Activated CD4-positive, alpha-beta memory T cell treated with anti-CD3 and anti-CD28 coated beads for 36 hours (primary cell): ENCODE measurements at regions of chr16 and their contacts with region 1.

Region 1: GRCh38 chr16:84970447-84971127 is 40.7 kb downstream of the ZDHHC7 start:
- DNase-seq: peak; percentile 85
- H3K4me3 Mint-ChIP-seq: no peak overlapping the region
- H3K27ac Mint-ChIP-seq: no peak overlapping the region
- H3K4me1 Mint-ChIP-seq: no peaks in the 10 kb centered on the region
- H3K27me3 Mint-ChIP-seq: no peaks in the 10 kb centered on the region

Region 2: GRCh38 chr16:84754353-84754856 is 216.2 kb before region 1 on chr16:
- CTCF ChIA-PET with region 1: interaction called, 81 read pairs
- POLR2A ChIA-PET with region 1: interaction called, 3 read pairs
- intact Hi-C with region 1: loop called (anchors 2 kb)
- DNase-seq: peak; percentile 65
- H3K4me3 Mint-ChIP-seq: peak overlapping the region; percentile 36
- H3K27ac Mint-ChIP-seq: no peak overlapping the region
- H3K4me1 Mint-ChIP-seq: peaks cover 87% of the 10 kb centered on the region
- H3K27me3 Mint-ChIP-seq: no peaks in the 10 kb centered on the region

Region 3: GRCh38 chr16:84851192-84852127 is 119.1 kb before region 1 on chr16:
- CTCF ChIA-PET with region 1: no interaction called
- POLR2A ChIA-PET with region 1: no interaction called
- intact Hi-C with region 1: no loop called
- DNase-seq: no peak
- H3K4me3 Mint-ChIP-seq: no peak overlapping the region
- H3K27ac Mint-ChIP-seq: no peak overlapping the region
- H3K4me1 Mint-ChIP-seq: no peaks in the 10 kb centered on the region
- H3K27me3 Mint-ChIP-seq: peaks cover 4% of the 10 kb centered on the region

Region 4: GRCh38 chr16:84925092-84925772 is 45.4 kb before region 1 on chr16:
- CTCF ChIA-PET with region 1: interaction called, 38 read pairs
- POLR2A ChIA-PET with region 1: no interaction called
- intact Hi-C with region 1: loop called (anchors 1 kb)
- DNase-seq: peak; percentile 78
- H3K4me3 Mint-ChIP-seq: no peak overlapping the region
- H3K27ac Mint-ChIP-seq: no peak overlapping the region
- H3K4me1 Mint-ChIP-seq: no peaks in the 10 kb centered on the region
- H3K27me3 Mint-ChIP-seq: peaks cover 3% of the 10 kb centered on the region

Region 5: GRCh38 chr16:84988322-84989080 is 17.9 kb after region 1 on chr16:
- CTCF ChIA-PET with region 1: interaction called, 12 read pairs
- POLR2A ChIA-PET with region 1: no interaction called
- intact Hi-C with region 1: no loop called
- DNase-seq: no peak
- H3K4me3 Mint-ChIP-seq: no peak overlapping the region
- H3K27ac Mint-ChIP-seq: no peak overlapping the region
- H3K4me1 Mint-ChIP-seq: peaks cover 29% of the 10 kb centered on the region
- H3K27me3 Mint-ChIP-seq: no peaks in the 10 kb centered on the region